Right ventricle myocardium inferior (tissue), 1 donor: ENCODE measurements at regions of chr5 and their contacts with region 1.

Region 1: DNA sequence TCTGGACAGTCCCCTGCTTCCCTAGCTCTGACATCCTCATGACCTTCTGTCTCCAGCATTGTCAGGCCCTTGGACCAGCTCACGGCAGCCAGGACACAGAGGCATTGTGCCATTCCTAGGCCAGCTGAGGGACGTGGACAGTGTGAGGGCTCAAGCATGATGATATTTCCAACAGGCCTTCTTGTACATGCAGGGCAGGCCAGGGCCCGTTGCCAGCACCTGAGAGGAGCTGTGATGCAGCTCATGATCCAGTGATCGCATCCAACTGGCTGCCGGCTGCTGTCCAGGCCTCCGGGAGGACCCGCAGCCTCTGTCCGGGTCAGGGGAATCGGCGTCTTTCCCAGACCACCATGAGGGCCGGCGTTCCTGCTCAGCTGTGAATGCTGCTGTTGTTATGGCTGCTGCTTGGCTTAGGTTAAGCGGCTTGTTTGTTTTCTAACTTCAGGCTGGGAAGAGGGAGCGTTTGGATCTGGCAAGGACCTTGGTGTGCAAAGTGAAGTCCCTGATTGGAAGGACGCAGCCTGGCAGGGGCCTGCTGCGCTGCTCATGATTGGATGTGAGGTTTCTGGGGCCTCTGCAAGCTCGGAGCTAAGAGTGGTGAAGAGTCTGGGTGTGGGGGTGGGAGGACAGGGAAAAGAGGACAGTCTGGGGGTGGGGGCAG is 53.8 kb downstream of the PDZD2 start:
- DNase-seq: peak; percentile 90
- ATAC-seq: peak; percentile 88

Region 2: DNA sequence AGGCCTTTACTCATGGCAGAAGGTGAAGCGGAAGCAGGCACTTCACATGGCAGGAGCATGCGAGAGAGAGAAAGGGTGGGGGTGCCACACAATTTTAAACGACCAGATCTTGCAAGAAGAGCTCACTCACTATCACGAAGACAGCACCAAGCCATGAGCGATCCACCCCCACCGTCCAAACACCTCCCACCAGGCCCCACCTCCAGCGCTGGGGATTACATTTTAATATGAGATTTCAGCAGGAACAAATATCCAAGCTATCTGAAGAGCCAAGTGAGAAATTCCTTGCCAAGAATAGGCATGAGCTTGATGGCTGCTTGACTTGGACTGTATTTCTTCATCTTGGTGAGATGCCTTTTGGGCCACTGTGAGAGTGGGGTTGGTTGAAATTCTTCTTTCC is 34.3 kb after region 1 on chr5:
- intact Hi-C with region 1: loop called (anchors 5 kb)
- DNase-seq: no peak
- ATAC-seq: peak; percentile 52

Region 3: DNA sequence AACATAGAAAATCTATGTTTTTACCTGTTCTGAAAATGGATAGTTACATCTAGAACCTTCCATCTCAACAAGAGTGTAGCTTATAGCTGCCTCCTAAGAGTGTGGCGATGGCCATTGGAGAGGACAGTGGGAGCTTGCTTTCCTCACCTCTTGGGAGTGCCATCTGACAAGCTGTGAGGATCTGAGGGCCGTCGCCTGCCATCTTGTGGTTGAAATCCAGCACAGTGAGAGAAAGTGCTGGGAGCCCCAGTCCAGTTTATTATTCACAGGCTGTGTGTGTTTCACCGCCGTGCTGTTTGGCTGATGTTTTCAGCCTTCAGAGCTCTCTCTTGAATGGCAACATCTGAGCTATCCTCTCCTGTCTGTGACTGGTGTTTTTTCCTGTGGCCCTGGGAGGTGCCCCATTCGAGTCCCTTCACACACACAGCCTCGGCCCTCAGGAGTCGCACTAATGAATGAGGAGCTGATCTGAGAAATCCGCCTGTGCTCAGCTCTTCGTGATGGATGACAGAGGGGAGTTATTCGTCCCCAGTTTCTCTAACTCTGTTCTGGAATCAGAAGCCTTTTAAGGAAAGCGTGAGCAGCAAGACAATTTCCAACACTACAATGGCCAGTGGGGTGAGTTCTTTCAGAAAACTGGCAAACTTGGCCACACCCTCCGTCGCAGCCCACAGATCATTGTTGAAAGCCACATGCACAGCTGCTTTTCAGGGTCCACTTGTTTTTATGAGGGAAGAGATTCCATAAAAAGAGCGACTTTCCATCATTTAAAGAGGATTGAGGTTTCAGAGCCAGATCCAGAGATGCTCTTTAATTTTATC is 116.6 kb after region 1 on chr5:
- intact Hi-C with region 1: no loop called
- DNase-seq: no peak
- ATAC-seq: peak; percentile 90